CD14-positive monocyte (primary cell): ENCODE measurements at regions of chr1 and their contacts with region 1.

Region 1: DNA sequence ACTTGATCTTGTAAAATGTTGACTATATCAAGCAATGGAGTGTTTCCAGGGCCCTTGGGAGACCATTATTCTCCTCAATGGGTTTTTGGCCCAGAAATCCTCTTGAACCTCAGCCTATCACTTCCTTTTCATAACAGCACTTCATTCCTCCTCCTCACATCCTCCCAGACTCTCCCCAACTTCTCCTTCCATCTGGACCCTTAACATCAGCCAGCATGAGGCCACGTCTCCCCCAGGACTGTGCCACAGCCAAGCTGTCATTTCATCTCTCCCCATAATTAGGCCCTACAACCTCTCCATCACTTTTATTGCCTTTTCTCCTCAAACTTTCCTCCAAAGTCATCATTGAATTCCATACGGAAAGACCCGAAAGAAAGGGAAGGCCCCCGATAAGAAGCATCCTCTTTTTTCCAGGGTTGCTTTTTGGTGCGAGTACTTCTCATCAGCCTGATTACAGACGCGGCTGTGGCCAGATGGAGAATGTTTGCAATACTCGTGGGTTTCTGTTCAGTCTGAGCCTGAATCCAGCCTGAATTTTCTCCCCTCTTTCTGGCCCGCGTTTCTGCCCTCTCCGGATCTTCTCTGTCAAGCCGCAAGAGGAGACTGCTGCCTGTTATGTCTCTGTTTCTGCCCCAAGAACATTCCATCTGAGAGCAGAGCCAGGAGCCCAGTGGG is 52.7 kb upstream of the SLC25A33 start:
- DNase-seq: no peak
- H3K4me3 ChIP-seq: no peak overlapping the region
- H3K4me3 Mint-ChIP-seq: no peak overlapping the region
- H3K27ac ChIP-seq: no peak overlapping the region
- H3K27ac Mint-ChIP-seq: no peak overlapping the region
- H3K4me1 ChIP-seq: peaks cover 4 to 5% of the 10 kb centered on the region in 2 donors
- H3K4me1 Mint-ChIP-seq: peaks cover 4% of the 10 kb centered on the region
- H3K27me3 ChIP-seq: no peaks in the 10 kb centered on the region
- H3K27me3 Mint-ChIP-seq: peaks cover 1 to 11% (median 6%) of the 10 kb centered on the region in 3 donors
- CTCF ChIP-seq: no peak

Region 2: GRCh38 chr1:9286556-9286955 is 200.0 kb before region 1 on chr1:
- intact Hi-C with region 1: loop called (anchors 1 to 2 kb)
- DNase-seq: no peak
- H3K4me3 ChIP-seq: no peak overlapping the region
- H3K4me3 Mint-ChIP-seq: no peak overlapping the region
- H3K27ac ChIP-seq: no peak overlapping the region
- H3K27ac Mint-ChIP-seq: no peak overlapping the region
- H3K4me1 ChIP-seq: peaks cover 9 to 17% of the 10 kb centered on the region in 2 donors
- H3K4me1 Mint-ChIP-seq: peaks cover 16% of the 10 kb centered on the region
- H3K27me3 ChIP-seq: peaks cover 0 to 5% of the 10 kb centered on the region in 2 donors
- H3K27me3 Mint-ChIP-seq: peaks cover 9 to 15% (median 11%) of the 10 kb centered on the region in 3 donors
- CTCF ChIP-seq: no peak